K562 (cell line): ENCODE measurements at regions of chr19 and their contacts with region 1.

Region 1: GRCh38 chr19:45770192-45771101 is 1.4 kb upstream of the SIX5 start:
- DNase-seq: peak; percentile 93 to 99 (median 96)
- ATAC-seq: peak; percentile 87
- H3K4me3 ChIP-seq: peak overlapping the region; percentile 56
- H3K27ac ChIP-seq: peak overlapping the region; percentile 75
- H3K4me1 ChIP-seq: peaks cover 10 to 69% of the 10 kb centered on the region in 2 experiments; a peak in 4 of 5 replicates
- H3K27me3 ChIP-seq: no peaks in the 10 kb centered on the region
- CTCF ChIP-seq: peak; percentile 83 to 91 (median 91)
- EP300 ChIP-seq: no peak
- POLR2A ChIP-seq: peak; percentile 73
- RAD21 ChIP-seq: peak; percentile 59 to 61

Region 2: GRCh38 chr19:45798995-45799517 is 28.6 kb after region 1 on chr19:
- CTCF ChIA-PET with region 1: interaction called, 22 read pairs
- POLR2A ChIA-PET with region 1: interaction called, 7 read pairs
- in situ Hi-C with region 1: no loop called
- intact Hi-C with region 1: loop called (anchors 1 kb)
- DNase-seq: peak; percentile 72 to 80 (median 76)
- ATAC-seq: peak; percentile 82
- H3K4me3 ChIP-seq: no peak overlapping the region
- H3K27ac ChIP-seq: no peak overlapping the region
- H3K4me1 ChIP-seq: peaks cover 9 to 15% of the 10 kb centered on the region in 2 experiments; a peak in 3 of 5 replicates
- H3K27me3 ChIP-seq: no peaks in the 10 kb centered on the region
- CTCF ChIP-seq: peak; percentile 72 to 82 (median 77)
- EP300 ChIP-seq: no peak
- POLR2A ChIP-seq: no peak
- RAD21 ChIP-seq: peak; percentile 41 to 64

Region 3: GRCh38 chr19:45895519-45895972 is 125.1 kb after region 1 on chr19:
- CTCF ChIA-PET with region 1: no interaction called
- POLR2A ChIA-PET with region 1: no interaction called
- in situ Hi-C with region 1: no loop called
- intact Hi-C with region 1: no loop called
- DNase-seq: no peak
- ATAC-seq: no peak
- H3K4me3 ChIP-seq: no peak overlapping the region
- H3K27ac ChIP-seq: no peak overlapping the region
- H3K4me1 ChIP-seq: peaks cover under 1 to 3% of the 10 kb centered on the region in 2 experiments; a peak in 3 of 5 replicates
- H3K27me3 ChIP-seq: no peaks in the 10 kb centered on the region
- CTCF ChIP-seq: no peak
- EP300 ChIP-seq: no peak
- POLR2A ChIP-seq: no peak
- RAD21 ChIP-seq: no peak